ENCODE measurements at regions of chrX and their contacts with region 1.

Region 1: DNA sequence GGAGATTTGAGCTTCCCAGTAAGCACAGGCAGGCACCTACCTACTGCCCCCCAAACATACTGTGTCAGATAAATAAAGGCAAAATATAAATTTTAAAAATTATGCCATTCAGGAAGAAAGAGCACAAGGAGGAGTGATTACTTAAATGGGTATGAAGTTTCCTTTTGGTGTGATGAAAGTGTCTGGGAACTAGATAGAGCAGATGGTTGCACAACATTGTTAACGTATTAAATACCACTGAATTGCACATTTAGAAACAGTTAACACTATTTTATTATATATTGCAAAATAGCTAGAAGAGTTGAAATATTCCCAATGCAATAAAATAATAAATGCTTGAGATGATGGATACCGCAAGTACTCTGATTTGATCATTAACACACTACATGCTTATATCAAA is 374.7 kb upstream of the FGF13 start:
- DNase-seq: no peak
- ATAC-seq: no peak
- H3K4me3 ChIP-seq: no peak overlapping the region
- H3K27ac ChIP-seq: no peak overlapping the region
- H3K4me1 ChIP-seq: no peaks in the 10 kb centered on the region
- H3K27me3 ChIP-seq: peaks cover 0 to 6% (median 0%) of the 10 kb centered on the region in 7 donors
- CTCF ChIP-seq: no peak

Region 2: DNA sequence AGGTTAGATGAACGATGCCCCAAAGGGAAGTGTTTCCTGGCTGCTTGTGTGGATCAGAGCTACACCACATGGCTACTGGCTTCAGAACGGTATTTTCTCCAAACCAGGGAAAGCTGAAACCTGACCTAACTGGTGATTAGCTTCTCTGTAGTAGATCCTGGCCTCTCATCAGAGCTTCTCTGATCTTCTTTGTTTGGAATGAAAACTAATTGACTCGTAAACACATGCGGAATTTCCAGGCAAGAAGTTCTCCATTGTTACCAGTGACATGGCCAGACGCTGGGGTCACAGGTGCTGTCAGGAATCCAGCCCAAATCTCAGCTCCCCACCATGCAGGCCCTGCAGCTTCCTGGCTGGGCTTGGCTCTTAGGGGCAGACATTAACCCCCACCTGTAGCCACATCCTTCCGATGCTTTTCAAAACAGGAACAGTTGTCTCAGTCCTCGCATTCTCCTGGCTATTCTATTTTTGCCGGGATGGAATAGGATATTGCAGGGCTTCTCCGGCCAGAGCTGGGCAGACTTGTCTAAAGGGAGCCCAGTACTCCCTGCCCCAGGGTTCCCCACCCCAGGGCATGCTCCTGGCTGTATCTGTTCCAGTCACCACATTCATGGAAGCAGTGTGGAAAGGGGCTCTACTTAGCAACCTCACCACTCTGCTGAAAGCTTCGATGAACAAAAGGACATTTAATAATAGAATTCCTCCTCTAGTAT is 138.9 kb after region 1 on chrX:
- intact Hi-C with region 1: loop called in 1 of 10 experiments (anchors 10 kb)
- DNase-seq: no peak
- ATAC-seq: peak in 1 of 8 donors; percentile 11
- H3K4me3 ChIP-seq: no peak overlapping the region
- H3K27ac ChIP-seq: no peak overlapping the region
- H3K4me1 ChIP-seq: no peaks in the 10 kb centered on the region
- H3K27me3 ChIP-seq: peaks cover 0 to 41% (median 0%) of the 10 kb centered on the region in 7 donors
- CTCF ChIP-seq: no peak